ENCODE measurements at regions of chr5 and their contacts with region 1.

Region 1: GRCh38 chr5:142507531-142508372 is 178.1 kb downstream of the FGF1 start:
- DNase-seq: peak in 1 of 2 experiments; percentile 8
- H3K4me3 ChIP-seq: peak overlapping the region; percentile 13; the same call in 1 of the 2 replicates
- H3K4me3 Mint-ChIP-seq: peak overlapping the region; percentile 57
- H3K27ac Mint-ChIP-seq: no peak overlapping the region
- H3K4me1 ChIP-seq: peaks cover 11% of the 10 kb centered on the region; the same call in 1 of the 2 replicates
- H3K4me1 Mint-ChIP-seq: peaks cover 20% of the 10 kb centered on the region
- H3K27me3 ChIP-seq: no peaks in the 10 kb centered on the region; the same call in 1 of the 2 replicates
- H3K27me3 Mint-ChIP-seq: no peaks in the 10 kb centered on the region
- CTCF ChIP-seq: no peak

Region 2: GRCh38 chr5:142572006-142572405 is 64.3 kb after region 1 on chr5:
- CTCF ChIA-PET with region 1: no interaction called
- POLR2A ChIA-PET with region 1: no interaction called
- intact Hi-C with region 1: loop called (anchors 2 kb)
- DNase-seq: no peak
- H3K4me3 ChIP-seq: no peak overlapping the region
- H3K4me3 Mint-ChIP-seq: no peak overlapping the region
- H3K27ac Mint-ChIP-seq: no peak overlapping the region
- H3K4me1 ChIP-seq: no peaks in the 10 kb centered on the region
- H3K4me1 Mint-ChIP-seq: no peaks in the 10 kb centered on the region
- H3K27me3 ChIP-seq: no peaks in the 10 kb centered on the region
- H3K27me3 Mint-ChIP-seq: peaks cover 6% of the 10 kb centered on the region
- CTCF ChIP-seq: no peak

Region 3: DNA sequence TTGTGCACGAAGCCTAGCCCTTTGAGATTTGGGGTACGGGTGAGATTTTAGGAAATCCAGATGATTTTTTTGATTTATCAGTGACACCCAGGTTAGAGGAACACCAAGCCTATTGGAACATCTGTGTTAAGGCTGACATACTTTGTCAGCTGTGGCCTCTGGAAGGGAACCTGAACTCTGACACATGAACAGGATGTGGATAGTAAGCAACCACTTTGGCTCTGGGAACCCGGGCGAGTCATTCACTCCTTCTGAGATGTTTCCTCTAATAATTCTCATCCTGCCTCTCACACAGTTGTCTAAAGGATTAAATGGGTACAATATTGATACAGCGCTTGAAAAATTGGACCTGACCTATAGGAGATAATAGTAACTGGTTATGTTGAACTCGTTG is 110.4 kb after region 1 on chr5:
- CTCF ChIA-PET with region 1: no interaction called
- POLR2A ChIA-PET with region 1: no interaction called
- intact Hi-C with region 1: no loop called
- DNase-seq: no peak
- H3K4me3 ChIP-seq: no peak overlapping the region
- H3K4me3 Mint-ChIP-seq: no peak overlapping the region
- H3K27ac Mint-ChIP-seq: no peak overlapping the region
- H3K4me1 ChIP-seq: no peaks in the 10 kb centered on the region
- H3K4me1 Mint-ChIP-seq: no peaks in the 10 kb centered on the region
- H3K27me3 ChIP-seq: no peaks in the 10 kb centered on the region
- H3K27me3 Mint-ChIP-seq: peaks cover 4% of the 10 kb centered on the region
- CTCF ChIP-seq: no peak

Region 4: DNA sequence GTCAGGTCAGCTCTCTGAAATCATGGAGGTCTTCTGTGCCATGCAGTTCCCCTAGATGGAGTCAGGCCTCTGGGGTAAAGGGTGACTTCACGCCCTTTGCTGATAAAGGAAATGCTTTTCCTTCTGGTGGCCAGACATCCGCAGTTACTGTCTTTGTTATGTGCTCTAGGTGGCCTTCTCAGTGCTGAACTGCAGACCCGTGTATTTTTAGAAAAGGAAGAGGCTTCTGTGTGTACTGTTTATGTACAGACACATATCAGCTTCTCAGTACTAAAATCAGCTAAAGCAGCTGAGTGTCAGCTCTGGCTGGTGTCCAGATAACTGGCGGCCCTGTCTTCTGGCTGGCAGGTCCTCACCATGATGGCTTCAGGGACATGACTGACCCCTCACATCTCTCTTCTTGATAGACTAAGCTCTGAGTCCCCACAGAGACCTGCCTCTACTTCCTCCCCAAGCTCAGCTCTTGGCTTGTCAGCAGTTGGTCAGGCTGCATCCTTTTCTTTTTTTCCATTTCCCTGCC is 337.7 kb after region 1 on chr5:
- CTCF ChIA-PET with region 1: no interaction called
- POLR2A ChIA-PET with region 1: no interaction called
- intact Hi-C with region 1: no loop called
- DNase-seq: no peak
- H3K4me3 ChIP-seq: no peak overlapping the region
- H3K4me3 Mint-ChIP-seq: no peak overlapping the region
- H3K27ac Mint-ChIP-seq: peak overlapping the region; percentile 77
- H3K4me1 ChIP-seq: peaks cover 25% of the 10 kb centered on the region
- H3K4me1 Mint-ChIP-seq: peaks cover 48% of the 10 kb centered on the region
- H3K27me3 ChIP-seq: no peaks in the 10 kb centered on the region
- H3K27me3 Mint-ChIP-seq: no peaks in the 10 kb centered on the region
- CTCF ChIP-seq: no peak